ENCODE measurements at regions of chr2 and their contacts with region 1.

Region 1: DNA sequence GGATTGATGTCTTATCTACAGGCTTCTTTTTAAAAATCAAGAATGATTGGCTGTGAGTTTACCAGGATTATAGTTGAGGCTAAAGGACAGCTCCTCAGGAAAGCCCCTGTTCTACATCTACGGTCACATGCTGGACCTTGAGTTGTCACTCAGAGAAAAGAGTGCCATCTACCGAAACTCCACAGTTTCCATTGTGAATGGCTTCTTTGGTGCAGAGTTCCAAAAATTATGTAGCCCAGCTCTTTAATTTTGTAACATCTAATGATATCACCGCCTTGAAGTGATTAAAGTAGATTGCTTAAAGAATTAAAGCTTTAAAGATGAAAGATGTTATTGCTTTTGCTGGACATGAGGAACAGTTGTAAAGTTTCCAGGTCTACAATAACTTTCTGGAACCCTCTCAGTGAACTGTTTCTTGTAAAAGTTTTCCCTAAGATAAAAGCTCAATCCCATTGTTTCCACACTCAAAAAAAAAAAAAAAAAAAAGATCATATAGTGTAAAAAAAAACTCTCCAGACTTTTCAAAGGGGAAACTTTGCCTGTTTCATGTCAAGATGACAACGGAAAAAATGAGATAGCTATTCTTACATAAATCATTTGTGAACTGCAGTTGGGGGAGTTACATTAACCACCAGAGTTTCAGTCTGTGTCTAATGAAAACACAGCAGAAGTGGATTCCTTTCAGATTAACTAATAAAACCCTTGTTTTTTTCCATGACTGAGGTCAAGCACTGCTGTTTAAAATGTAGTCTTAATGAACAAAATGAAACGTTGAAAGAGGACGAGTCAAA is 4.3 kb downstream of the COL3A1 start:
- DNase-seq: peak; percentile 69
- ATAC-seq: peak; percentile 12; the same call in 1 of the 2 replicates
- H3K4me3 ChIP-seq: peak overlapping the region; percentile 19
- H3K27ac ChIP-seq: peak overlapping the region; percentile 74; the same call in 1 of the 2 replicates
- H3K4me1 ChIP-seq: peaks cover 3% of the 10 kb centered on the region
- H3K27me3 ChIP-seq: no peaks in the 10 kb centered on the region
- CTCF ChIP-seq: peak; percentile 43
- POLR2A ChIP-seq: no peak
- RAD21 ChIP-seq: peak; percentile 51

Region 2: GRCh38 chr2:187594801-187595200 is 1383.7 kb before region 1 on chr2:
- CTCF ChIA-PET with region 1: no interaction called
- POLR2A ChIA-PET with region 1: no interaction called
- dilution Hi-C with region 1: no loop called
- in situ Hi-C with region 1: no loop called
- intact Hi-C with region 1: loop called (anchors 5 kb)
- DNase-seq: peak; percentile 44
- ATAC-seq: peak; percentile 69
- H3K4me3 ChIP-seq: no peak overlapping the region
- H3K27ac ChIP-seq: no peak overlapping the region
- H3K4me1 ChIP-seq: peaks cover 2% of the 10 kb centered on the region; the same call in 1 of the 2 replicates
- H3K27me3 ChIP-seq: no peaks in the 10 kb centered on the region; the same call in 1 of the 2 replicates
- CTCF ChIP-seq: peak; percentile 49
- POLR2A ChIP-seq: no peak
- RAD21 ChIP-seq: peak; percentile 50

Region 3: GRCh38 chr2:188524519-188525113 is 453.9 kb before region 1 on chr2:
- CTCF ChIA-PET with region 1: interaction called, 5 read pairs
- POLR2A ChIA-PET with region 1: no interaction called
- dilution Hi-C with region 1: no loop called
- in situ Hi-C with region 1: loop called (anchors 5 kb)
- intact Hi-C with region 1: loop called (anchors 1 kb)
- DNase-seq: peak; percentile 69
- ATAC-seq: peak; percentile 69; the same call in 1 of the 2 replicates
- H3K4me3 ChIP-seq: no peak overlapping the region
- H3K27ac ChIP-seq: no peak overlapping the region
- H3K4me1 ChIP-seq: peaks cover 2% of the 10 kb centered on the region; the same call in 1 of the 2 replicates
- H3K27me3 ChIP-seq: no peaks in the 10 kb centered on the region
- CTCF ChIP-seq: peak; percentile 85
- POLR2A ChIP-seq: no peak
- RAD21 ChIP-seq: peak; percentile 80

Region 4: GRCh38 chr2:188623995-188624643 is 354.4 kb before region 1 on chr2:
- CTCF ChIA-PET with region 1: no interaction called
- POLR2A ChIA-PET with region 1: no interaction called
- dilution Hi-C with region 1: no loop called
- in situ Hi-C with region 1: no loop called
- intact Hi-C with region 1: no loop called
- DNase-seq: peak; percentile 80
- ATAC-seq: peak; percentile 88
- H3K4me3 ChIP-seq: no peak overlapping the region
- H3K27ac ChIP-seq: no peak overlapping the region
- H3K4me1 ChIP-seq: no peaks in the 10 kb centered on the region
- H3K27me3 ChIP-seq: no peaks in the 10 kb centered on the region
- CTCF ChIP-seq: no peak
- POLR2A ChIP-seq: no peak
- RAD21 ChIP-seq: no peak

Region 5: DNA sequence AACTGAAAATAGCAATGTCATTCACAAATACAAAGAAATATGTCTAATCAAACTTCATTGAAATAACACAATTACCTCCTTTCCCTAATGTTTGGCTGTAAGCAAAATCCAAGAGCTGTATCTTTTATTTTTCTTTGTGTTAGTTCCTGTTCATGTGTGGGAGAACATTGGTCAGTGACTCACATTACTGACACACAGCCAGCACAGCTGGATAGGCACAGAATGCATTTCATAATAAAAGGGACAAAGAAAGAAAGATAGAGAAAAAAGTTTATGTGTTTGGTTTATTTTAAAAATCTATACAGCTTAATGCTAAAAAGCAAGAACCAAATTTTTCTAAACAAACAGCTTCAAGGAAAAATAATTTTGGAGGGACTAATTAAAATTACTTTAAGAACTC is 189.9 kb before region 1 on chr2:
- CTCF ChIA-PET with region 1: interaction called, 3 read pairs
- POLR2A ChIA-PET with region 1: interaction called, 5 read pairs
- dilution Hi-C with region 1: no loop called
- in situ Hi-C with region 1: loop called (anchors 10 kb)
- intact Hi-C with region 1: loop called (anchors 2 kb)
- DNase-seq: peak; percentile 93
- ATAC-seq: peak; percentile 52
- H3K4me3 ChIP-seq: no peak overlapping the region
- H3K27ac ChIP-seq: peak overlapping the region; percentile 37; the same call in 1 of the 2 replicates
- H3K4me1 ChIP-seq: peaks cover 9% of the 10 kb centered on the region
- H3K27me3 ChIP-seq: no peaks in the 10 kb centered on the region
- CTCF ChIP-seq: no peak
- POLR2A ChIP-seq: no peak
- RAD21 ChIP-seq: no peak

Region 6: GRCh38 chr2:188884046-188884445 is 94.4 kb before region 1 on chr2:
- CTCF ChIA-PET with region 1: no interaction called
- POLR2A ChIA-PET with region 1: interaction called, 3 read pairs
- dilution Hi-C with region 1: no loop called
- in situ Hi-C with region 1: no loop called
- intact Hi-C with region 1: loop called (anchors 5 kb)
- DNase-seq: peak; percentile 88
- ATAC-seq: peak; percentile 85
- H3K4me3 ChIP-seq: no peak overlapping the region
- H3K27ac ChIP-seq: peak overlapping the region; percentile 41; the same call in 1 of the 2 replicates
- H3K4me1 ChIP-seq: peaks cover 3% of the 10 kb centered on the region; the same call in 1 of the 2 replicates
- H3K27me3 ChIP-seq: no peaks in the 10 kb centered on the region
- CTCF ChIP-seq: no peak
- POLR2A ChIP-seq: no peak
- RAD21 ChIP-seq: no peak

Region 7: GRCh38 chr2:189179570-189179950 is 201.1 kb after region 1 on chr2 and contains the start of gene COL5A2:
- CTCF ChIA-PET with region 1: no interaction called
- POLR2A ChIA-PET with region 1: no interaction called
- dilution Hi-C with region 1: no loop called
- in situ Hi-C with region 1: no loop called
- intact Hi-C with region 1: loop called (anchors 5 kb)
- DNase-seq: peak; percentile 91
- ATAC-seq: peak; percentile 79
- H3K4me3 ChIP-seq: peak within 1 kb of the TSS; percentile 96
- H3K27ac ChIP-seq: peak within 1 kb of the TSS; percentile 87
- H3K4me1 ChIP-seq: peaks cover 2% of the 10 kb centered on the region; the same call in 1 of the 2 replicates
- H3K27me3 ChIP-seq: no peaks in the 10 kb centered on the region
- CTCF ChIP-seq: no peak
- POLR2A ChIP-seq: peak; percentile 80
- RAD21 ChIP-seq: peak; percentile 41
- total RNA-seq, gene COL5A2: 235 and 257 TPM in 2 replicates